Endothelial cell of umbilical vein (primary cell): ENCODE measurements at regions of chr4 and their contacts with region 1.

Region 1: DNA sequence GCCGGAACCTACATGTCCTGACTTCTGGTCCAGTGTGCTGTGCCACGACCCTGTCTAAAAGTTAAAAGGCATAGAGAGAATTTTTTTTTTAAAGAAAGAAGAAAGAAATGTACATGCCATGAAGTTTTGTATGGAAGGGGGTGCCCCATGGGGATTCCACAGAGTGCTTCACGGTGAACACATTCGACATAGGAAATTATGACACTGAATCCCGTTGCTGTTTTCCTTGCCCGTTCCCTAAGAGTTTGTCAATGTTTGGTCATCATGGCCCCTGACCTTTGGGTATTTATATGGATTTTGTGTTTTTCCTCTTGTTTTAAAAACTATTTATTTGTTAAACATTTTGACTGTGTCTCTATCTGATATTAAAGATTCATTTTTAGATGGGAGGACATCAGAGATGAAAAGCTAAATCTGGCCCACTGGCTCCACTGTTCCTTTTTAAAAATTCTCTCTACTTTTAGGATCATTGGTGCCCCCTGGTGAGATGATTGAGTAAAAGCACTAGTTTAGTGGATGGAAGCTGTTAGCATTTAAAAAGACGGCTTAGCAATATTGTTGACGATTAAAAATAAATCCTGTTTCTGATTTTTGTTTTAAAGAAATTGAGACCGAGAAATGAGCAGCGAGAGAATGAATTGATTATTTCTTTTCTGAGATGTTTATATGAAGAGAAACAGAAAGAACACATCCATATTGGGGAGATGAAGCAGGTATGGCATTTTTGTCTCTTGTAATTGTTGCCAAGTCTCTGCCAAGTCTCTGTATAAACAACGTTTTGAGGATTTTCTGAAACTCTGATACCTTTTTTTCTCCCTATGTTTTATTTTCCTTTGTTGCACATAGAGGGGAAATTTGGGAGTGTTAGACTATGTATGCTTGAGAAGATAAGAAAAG is 75.0 kb downstream of the PTTG2 start:
- DNase-seq: peak; percentile 68
- H3K4me3 ChIP-seq: no peak overlapping the region
- H3K27ac ChIP-seq: peak overlapping the region; percentile 31
- H3K4me1 ChIP-seq: peaks cover 5% of the 10 kb centered on the region
- H3K27me3 ChIP-seq: no peaks in the 10 kb centered on the region
- CTCF ChIP-seq: peak; percentile 49 to 50
- POLR2A ChIP-seq: no peak

Region 2: GRCh38 chr4:37656649-37657048 is 378.6 kb before region 1 on chr4:
- CTCF ChIA-PET with region 1: no interaction called
- POLR2A ChIA-PET with region 1: no interaction called
- dilution Hi-C with region 1: no loop called
- intact Hi-C with region 1: no loop called
- DNase-seq: no peak
- H3K4me3 ChIP-seq: no peak overlapping the region
- H3K27ac ChIP-seq: no peak overlapping the region
- H3K4me1 ChIP-seq: peaks cover 19% of the 10 kb centered on the region
- H3K27me3 ChIP-seq: no peaks in the 10 kb centered on the region
- CTCF ChIP-seq: no peak
- POLR2A ChIP-seq: no peak

Region 3: DNA sequence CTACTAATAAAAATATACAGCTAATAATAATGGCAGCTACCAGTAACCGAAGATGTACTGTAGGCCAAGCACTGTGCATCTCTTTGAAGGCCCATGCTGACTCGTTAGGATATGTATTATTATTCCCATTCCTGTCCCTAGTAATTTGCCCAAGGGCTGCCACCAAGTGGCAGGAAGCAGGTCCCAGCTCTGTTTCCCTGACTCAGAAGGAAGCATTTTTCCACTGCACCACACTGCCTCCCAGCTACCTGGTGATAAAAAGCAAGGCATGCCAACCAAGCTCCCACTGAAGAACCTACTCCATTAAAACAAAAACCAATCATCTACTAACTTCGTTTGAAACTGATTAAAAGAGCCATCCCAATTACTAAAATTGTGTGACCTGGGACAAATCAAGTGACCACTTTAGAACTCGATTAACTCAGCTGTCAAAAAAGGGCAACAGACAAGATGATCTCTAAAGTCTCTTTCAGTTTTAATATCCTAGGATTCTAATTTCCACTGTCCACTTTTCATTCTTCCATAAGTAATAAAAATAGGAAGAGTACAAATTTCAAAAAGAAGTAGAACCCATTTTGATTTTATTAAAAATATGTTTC is 233.1 kb before region 1 on chr4:
- CTCF ChIA-PET with region 1: interaction called, 67 read pairs
- POLR2A ChIA-PET with region 1: no interaction called
- dilution Hi-C with region 1: no loop called
- intact Hi-C with region 1: loop called (anchors 1 kb)
- DNase-seq: peak; percentile 73
- H3K4me3 ChIP-seq: no peak overlapping the region
- H3K27ac ChIP-seq: no peak overlapping the region
- H3K4me1 ChIP-seq: no peaks in the 10 kb centered on the region
- H3K27me3 ChIP-seq: peaks cover 0 to 3% of the 10 kb centered on the region in 2 experiments
- CTCF ChIP-seq: peak; percentile 42 to 51
- POLR2A ChIP-seq: no peak

Region 4: DNA sequence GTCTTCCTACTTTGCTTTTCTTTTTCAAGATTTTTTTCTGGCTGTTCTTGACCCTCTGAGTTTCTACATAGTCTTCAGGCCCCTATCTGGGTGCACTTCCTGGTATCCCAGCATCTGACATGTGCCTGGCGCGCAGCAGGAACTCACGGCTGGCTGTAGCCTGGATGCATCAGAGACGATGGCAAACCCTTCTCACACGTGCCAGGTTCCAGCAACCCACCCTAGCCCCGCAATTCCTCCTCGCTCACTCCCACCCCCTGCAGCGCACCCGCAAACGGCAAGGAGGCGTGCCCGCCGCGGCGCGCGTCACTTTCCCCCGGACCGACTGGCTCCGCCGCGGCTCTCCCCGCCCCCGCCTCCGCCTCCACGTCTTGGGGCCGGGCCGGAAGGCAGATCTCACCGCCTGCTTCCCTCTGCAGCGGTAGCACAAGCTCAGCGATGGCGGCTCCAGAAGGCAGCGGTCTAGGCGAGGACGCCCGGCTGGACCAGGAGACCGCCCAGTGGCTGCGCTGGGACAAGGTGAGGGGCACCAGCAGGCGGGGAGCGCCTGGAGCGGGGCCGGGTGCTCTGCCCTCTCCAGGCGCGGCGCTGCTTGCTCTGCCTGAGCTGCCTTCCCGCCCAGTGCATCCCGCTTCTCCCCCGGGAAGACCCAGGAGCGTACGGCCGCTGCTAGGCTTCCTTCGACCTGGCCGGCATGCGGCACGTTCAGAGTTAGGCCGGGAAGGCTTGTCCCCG is 208.8 kb before region 1 on chr4 and contains the start of gene PGM2:
- CTCF ChIA-PET with region 1: interaction called, 20 read pairs
- POLR2A ChIA-PET with region 1: no interaction called
- dilution Hi-C with region 1: no loop called
- intact Hi-C with region 1: no loop called
- DNase-seq: peak; percentile 91
- H3K4me3 ChIP-seq: peak within 1 kb of the TSS; percentile 45 to 96 (median 95)
- H3K27ac ChIP-seq: peak within 1 kb of the TSS; percentile 56
- H3K4me1 ChIP-seq: peaks cover 19% of the 10 kb centered on the region
- H3K27me3 ChIP-seq: no peaks in the 10 kb centered on the region
- CTCF ChIP-seq: peak in 1 of 2 donors; percentile 16
- POLR2A ChIP-seq: peak; percentile 87
- total RNA-seq, gene PGM2: 45.8 and 53.9 TPM in 2 replicates

Region 5: GRCh38 chr4:37891260-37892159 is 143.7 kb before region 1 on chr4:
- CTCF ChIA-PET with region 1: interaction called, 9 read pairs
- POLR2A ChIA-PET with region 1: no interaction called
- dilution Hi-C with region 1: no loop called
- intact Hi-C with region 1: loop called (anchors 1 kb)
- DNase-seq: peak; percentile 17
- H3K4me3 ChIP-seq: peak overlapping the region; percentile 44 to 64 (median 48)
- H3K27ac ChIP-seq: no peak overlapping the region
- H3K4me1 ChIP-seq: peaks cover 7% of the 10 kb centered on the region
- H3K27me3 ChIP-seq: peaks cover 30 to 35% of the 10 kb centered on the region in 2 experiments
- CTCF ChIP-seq: peak in 1 of 2 donors; percentile 15
- POLR2A ChIP-seq: no peak

Region 6: GRCh38 chr4:38046728-38047489 is 11.7 kb after region 1 on chr4:
- CTCF ChIA-PET with region 1: interaction called, 16 read pairs
- POLR2A ChIA-PET with region 1: no interaction called
- dilution Hi-C with region 1: no loop called
- intact Hi-C with region 1: no loop called
- DNase-seq: no peak
- H3K4me3 ChIP-seq: no peak overlapping the region
- H3K27ac ChIP-seq: no peak overlapping the region
- H3K4me1 ChIP-seq: peaks cover 17% of the 10 kb centered on the region
- H3K27me3 ChIP-seq: no peaks in the 10 kb centered on the region
- CTCF ChIP-seq: no peak
- POLR2A ChIP-seq: no peak

Region 7: DNA sequence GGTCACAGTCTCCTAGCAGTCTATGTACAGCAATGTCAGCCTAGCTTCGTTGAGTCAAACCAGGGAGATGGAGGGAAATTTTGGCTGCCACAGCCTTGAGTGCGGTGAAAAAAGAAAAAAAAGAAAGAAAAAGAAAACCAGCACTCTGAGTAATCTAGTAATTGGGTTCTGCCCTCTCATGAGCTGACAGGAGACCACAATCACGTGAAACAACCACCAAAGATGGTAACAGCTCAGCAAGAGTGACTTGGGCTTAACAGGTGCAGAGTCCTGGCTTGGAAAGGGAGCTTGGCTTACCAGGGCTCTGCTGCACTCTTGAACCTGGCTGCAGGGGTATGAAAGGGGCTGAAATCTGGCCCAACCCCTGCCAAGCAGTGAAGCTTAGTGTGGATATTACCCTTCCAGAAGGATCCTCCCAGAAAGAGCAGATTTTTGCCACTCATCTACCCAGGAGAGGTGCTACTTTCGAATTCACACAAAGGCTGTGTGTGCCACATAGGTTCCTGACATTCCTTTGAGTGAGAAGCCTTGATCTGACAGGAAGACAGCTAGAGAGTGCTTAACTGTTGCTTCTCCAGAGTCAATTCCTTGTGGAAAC is 275.3 kb after region 1 on chr4:
- CTCF ChIA-PET with region 1: no interaction called
- POLR2A ChIA-PET with region 1: no interaction called
- dilution Hi-C with region 1: no loop called
- intact Hi-C with region 1: no loop called
- DNase-seq: no peak
- H3K4me3 ChIP-seq: no peak overlapping the region
- H3K27ac ChIP-seq: no peak overlapping the region
- H3K4me1 ChIP-seq: peaks cover 2% of the 10 kb centered on the region
- H3K27me3 ChIP-seq: no peaks in the 10 kb centered on the region
- CTCF ChIP-seq: no peak
- POLR2A ChIP-seq: no peak